ENCODE measurements at regions of chr22 and their contacts with region 1.

Region 1: GRCh38 chr22:46542011-46542985 is 4.9 kb upstream of the CELSR1 start:
- DNase-seq: peak; percentile 82
- ATAC-seq: peak; percentile 94
- H3K4me3 Mint-ChIP-seq: no peak overlapping the region
- H3K27ac Mint-ChIP-seq: no peak overlapping the region
- H3K4me1 Mint-ChIP-seq: peaks cover 11% of the 10 kb centered on the region
- H3K27me3 Mint-ChIP-seq: peaks cover 25% of the 10 kb centered on the region

Region 2: GRCh38 chr22:46355371-46355995 is 186.8 kb before region 1 on chr22:
- CTCF ChIA-PET with region 1: interaction called, 4 read pairs
- POLR2A ChIA-PET with region 1: no interaction called
- intact Hi-C with region 1: loop called in 1 of 2 experiments (anchors 1 kb)
- DNase-seq: peak; percentile 79
- ATAC-seq: peak; percentile 59
- H3K4me3 Mint-ChIP-seq: no peak overlapping the region
- H3K27ac Mint-ChIP-seq: no peak overlapping the region
- H3K4me1 Mint-ChIP-seq: no peaks in the 10 kb centered on the region
- H3K27me3 Mint-ChIP-seq: no peaks in the 10 kb centered on the region

Region 3: DNA sequence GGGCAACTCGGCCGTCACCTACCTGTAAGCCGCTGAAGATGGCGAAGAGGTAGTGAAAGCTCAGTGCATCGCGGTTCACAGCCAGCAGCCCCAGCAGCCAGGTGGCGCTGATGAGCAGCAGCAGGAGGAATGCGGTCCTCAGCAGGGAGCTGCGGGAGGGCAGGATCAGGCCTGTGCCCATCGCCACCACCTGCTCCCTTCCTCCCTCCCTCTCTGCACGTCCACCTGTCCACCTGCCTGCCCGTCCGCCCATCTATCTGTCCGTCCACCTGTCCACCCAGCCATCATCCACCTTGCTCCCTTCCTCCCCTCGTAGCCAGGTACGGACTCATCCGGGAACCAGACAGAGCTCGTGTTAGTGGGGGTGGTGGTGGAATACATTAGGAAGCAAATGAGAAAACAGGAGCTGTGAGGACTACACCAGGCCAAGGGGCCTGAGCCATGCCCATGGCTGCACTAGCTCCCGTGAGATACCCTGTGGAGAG is 174.5 kb before region 1 on chr22:
- CTCF ChIA-PET with region 1: interaction called, 57 read pairs
- POLR2A ChIA-PET with region 1: interaction called, 4 read pairs
- intact Hi-C with region 1: loop called (anchors 1 kb)
- DNase-seq: peak; percentile 88
- ATAC-seq: peak; percentile 81
- H3K4me3 Mint-ChIP-seq: no peak overlapping the region
- H3K27ac Mint-ChIP-seq: no peak overlapping the region
- H3K4me1 Mint-ChIP-seq: peaks cover 21% of the 10 kb centered on the region
- H3K27me3 Mint-ChIP-seq: no peaks in the 10 kb centered on the region

Region 4: GRCh38 chr22:46436595-46437175 is 105.6 kb before region 1 on chr22:
- CTCF ChIA-PET with region 1: no interaction called
- POLR2A ChIA-PET with region 1: no interaction called
- intact Hi-C with region 1: no loop called
- DNase-seq: no peak
- ATAC-seq: no peak
- H3K4me3 Mint-ChIP-seq: no peak overlapping the region
- H3K27ac Mint-ChIP-seq: no peak overlapping the region
- H3K4me1 Mint-ChIP-seq: peaks cover 8% of the 10 kb centered on the region
- H3K27me3 Mint-ChIP-seq: no peaks in the 10 kb centered on the region

Region 5: GRCh38 chr22:46453006-46453828 is 89.1 kb before region 1 on chr22:
- CTCF ChIA-PET with region 1: no interaction called
- POLR2A ChIA-PET with region 1: no interaction called
- intact Hi-C with region 1: no loop called
- DNase-seq: no peak
- ATAC-seq: no peak
- H3K4me3 Mint-ChIP-seq: no peak overlapping the region
- H3K27ac Mint-ChIP-seq: no peak overlapping the region
- H3K4me1 Mint-ChIP-seq: no peaks in the 10 kb centered on the region
- H3K27me3 Mint-ChIP-seq: no peaks in the 10 kb centered on the region

Region 6: GRCh38 chr22:46484861-46485595 is 57.3 kb before region 1 on chr22:
- CTCF ChIA-PET with region 1: no interaction called
- POLR2A ChIA-PET with region 1: no interaction called
- intact Hi-C with region 1: no loop called
- DNase-seq: no peak
- ATAC-seq: no peak
- H3K4me3 Mint-ChIP-seq: no peak overlapping the region
- H3K27ac Mint-ChIP-seq: no peak overlapping the region
- H3K4me1 Mint-ChIP-seq: peaks cover 15% of the 10 kb centered on the region
- H3K27me3 Mint-ChIP-seq: no peaks in the 10 kb centered on the region

Region 7: DNA sequence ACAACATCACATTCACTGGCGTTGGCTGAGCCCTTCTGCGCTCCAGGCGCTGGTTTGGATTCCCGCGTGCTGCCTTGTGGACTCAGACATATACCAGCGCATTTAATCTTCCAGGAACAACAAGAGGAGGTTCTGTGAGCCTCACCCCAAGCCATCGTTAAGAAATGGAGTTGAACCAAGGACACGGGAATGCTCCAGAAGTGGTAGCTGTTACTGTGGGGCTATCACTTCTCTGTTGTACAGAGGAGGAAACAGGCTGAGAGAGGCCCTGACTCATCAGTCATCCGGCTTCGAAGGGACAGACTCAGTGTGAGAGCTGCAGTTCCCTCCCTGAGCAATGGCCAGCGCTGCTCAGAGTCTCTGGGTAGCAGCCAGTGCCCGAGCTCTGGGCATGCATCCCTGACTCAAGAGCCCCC is 511.4 kb after region 1 on chr22:
- CTCF ChIA-PET with region 1: no interaction called
- POLR2A ChIA-PET with region 1: no interaction called
- intact Hi-C with region 1: no loop called
- DNase-seq: no peak
- ATAC-seq: no peak
- H3K4me3 Mint-ChIP-seq: no peak overlapping the region
- H3K27ac Mint-ChIP-seq: no peak overlapping the region
- H3K4me1 Mint-ChIP-seq: peaks cover 6% of the 10 kb centered on the region
- H3K27me3 Mint-ChIP-seq: no peaks in the 10 kb centered on the region

Measured in activated CD4-positive, alpha-beta T cell treated with anti-CD3 and anti-CD28 coated beads for 36 hours (primary cell).